Calu3 (cell line): ENCODE measurements at regions of chr20 and their contacts with region 1.

Region 1: GRCh38 chr20:31951530-31952453 is at the start of gene PDRG1:
- DNase-seq: peak; percentile 99
- H3K4me3 Mint-ChIP-seq: peak within 1 kb of the TSS; percentile 82
- H3K27ac Mint-ChIP-seq: peak within 1 kb of the TSS; percentile 91
- H3K4me1 Mint-ChIP-seq: peaks cover 20% of the 10 kb centered on the region
- H3K27me3 Mint-ChIP-seq: peaks cover 43% of the 10 kb centered on the region
- CTCF ChIP-seq: peak; percentile 90
- total RNA-seq, gene PDRG1: 21.4 and 24.5 TPM in 2 replicates

Region 2: GRCh38 chr20:31811796-31812728 is 139.7 kb before region 1 on chr20:
- CTCF ChIA-PET with region 1: no interaction called
- intact Hi-C with region 1: no loop called
- DNase-seq: no peak
- H3K4me3 Mint-ChIP-seq: no peak overlapping the region
- H3K27ac Mint-ChIP-seq: peak overlapping the region; percentile 3
- H3K4me1 Mint-ChIP-seq: no peaks in the 10 kb centered on the region
- H3K27me3 Mint-ChIP-seq: no peaks in the 10 kb centered on the region
- CTCF ChIP-seq: no peak

Region 3: GRCh38 chr20:31835977-31836852 is 115.6 kb before region 1 on chr20:
- CTCF ChIA-PET with region 1: no interaction called
- intact Hi-C with region 1: loop called (anchors 5 kb)
- DNase-seq: peak; percentile 97
- H3K4me3 Mint-ChIP-seq: peak overlapping the region; percentile 6
- H3K27ac Mint-ChIP-seq: no peak overlapping the region
- H3K4me1 Mint-ChIP-seq: peaks cover 17% of the 10 kb centered on the region
- H3K27me3 Mint-ChIP-seq: no peaks in the 10 kb centered on the region
- CTCF ChIP-seq: no peak

Region 4: DNA sequence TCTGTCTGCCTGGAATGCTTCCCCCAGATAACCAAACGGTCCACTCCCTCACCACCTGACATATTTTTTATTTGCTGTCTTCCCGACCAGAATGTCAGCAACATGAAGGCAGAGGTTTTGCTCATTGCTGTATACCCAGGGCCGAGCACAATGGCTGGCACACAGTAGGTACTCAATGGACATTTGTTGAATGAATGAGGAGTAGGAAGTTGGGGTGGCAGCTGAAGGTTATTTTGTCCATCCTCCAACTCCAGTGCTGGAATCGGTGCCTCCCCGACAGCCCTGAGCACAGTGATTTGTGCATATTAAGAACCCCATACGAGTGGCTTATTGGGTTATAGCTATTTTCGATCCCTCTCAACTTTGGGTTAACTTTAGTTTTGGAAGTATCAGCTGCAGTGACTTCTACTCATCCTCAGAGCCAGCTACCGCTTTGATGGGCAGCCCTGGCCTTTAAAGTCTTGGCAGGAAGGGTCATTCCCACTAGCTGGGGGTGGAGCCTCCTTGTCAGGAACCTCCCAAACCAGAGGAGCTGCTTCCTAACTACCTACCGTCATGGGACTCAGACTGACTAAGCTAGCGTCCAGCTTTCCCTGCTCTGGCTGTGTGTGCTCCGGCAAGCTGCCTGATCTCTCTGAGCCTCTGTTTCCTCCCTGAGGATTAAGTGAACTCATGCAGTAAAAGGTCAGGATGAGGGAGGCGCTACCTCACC is 91.6 kb before region 1 on chr20:
- CTCF ChIA-PET with region 1: interaction called, 14 read pairs
- intact Hi-C with region 1: loop called (anchors 2 kb)
- DNase-seq: peak; percentile 58
- H3K4me3 Mint-ChIP-seq: peak overlapping the region; percentile 66
- H3K27ac Mint-ChIP-seq: no peak overlapping the region
- H3K4me1 Mint-ChIP-seq: peaks cover 16% of the 10 kb centered on the region
- H3K27me3 Mint-ChIP-seq: no peaks in the 10 kb centered on the region
- CTCF ChIP-seq: no peak

Region 5: GRCh38 chr20:31984981-31985471 is 33.2 kb after region 1 on chr20:
- CTCF ChIA-PET with region 1: no interaction called
- intact Hi-C with region 1: no loop called
- DNase-seq: no peak
- H3K4me3 Mint-ChIP-seq: no peak overlapping the region
- H3K27ac Mint-ChIP-seq: no peak overlapping the region
- H3K4me1 Mint-ChIP-seq: no peaks in the 10 kb centered on the region
- H3K27me3 Mint-ChIP-seq: no peaks in the 10 kb centered on the region
- CTCF ChIP-seq: no peak

Region 6: DNA sequence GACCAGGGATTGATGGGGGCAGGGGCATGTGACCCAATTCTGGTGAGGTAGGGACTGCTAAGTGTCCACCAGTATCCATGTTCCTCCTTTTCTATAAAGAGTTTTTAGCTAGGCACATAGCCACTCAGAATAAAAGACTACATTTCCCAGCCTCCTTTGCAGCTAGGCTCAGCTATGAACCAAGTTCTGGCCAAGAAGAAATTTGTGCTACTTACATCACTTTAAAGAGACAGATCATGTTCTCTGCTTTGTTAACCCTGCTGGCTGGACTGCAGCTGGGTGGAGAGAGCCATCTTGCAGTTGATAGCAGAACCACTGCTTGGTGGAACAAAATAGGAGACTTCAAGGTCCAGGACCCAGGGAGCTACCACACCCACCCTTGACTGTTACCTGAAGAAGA is 53.2 kb after region 1 on chr20:
- CTCF ChIA-PET with region 1: no interaction called
- intact Hi-C with region 1: no loop called
- DNase-seq: no peak
- H3K4me3 Mint-ChIP-seq: no peak overlapping the region
- H3K27ac Mint-ChIP-seq: no peak overlapping the region
- H3K4me1 Mint-ChIP-seq: peaks cover 8% of the 10 kb centered on the region
- H3K27me3 Mint-ChIP-seq: peaks cover 98% of the 10 kb centered on the region
- CTCF ChIP-seq: no peak

Region 7: DNA sequence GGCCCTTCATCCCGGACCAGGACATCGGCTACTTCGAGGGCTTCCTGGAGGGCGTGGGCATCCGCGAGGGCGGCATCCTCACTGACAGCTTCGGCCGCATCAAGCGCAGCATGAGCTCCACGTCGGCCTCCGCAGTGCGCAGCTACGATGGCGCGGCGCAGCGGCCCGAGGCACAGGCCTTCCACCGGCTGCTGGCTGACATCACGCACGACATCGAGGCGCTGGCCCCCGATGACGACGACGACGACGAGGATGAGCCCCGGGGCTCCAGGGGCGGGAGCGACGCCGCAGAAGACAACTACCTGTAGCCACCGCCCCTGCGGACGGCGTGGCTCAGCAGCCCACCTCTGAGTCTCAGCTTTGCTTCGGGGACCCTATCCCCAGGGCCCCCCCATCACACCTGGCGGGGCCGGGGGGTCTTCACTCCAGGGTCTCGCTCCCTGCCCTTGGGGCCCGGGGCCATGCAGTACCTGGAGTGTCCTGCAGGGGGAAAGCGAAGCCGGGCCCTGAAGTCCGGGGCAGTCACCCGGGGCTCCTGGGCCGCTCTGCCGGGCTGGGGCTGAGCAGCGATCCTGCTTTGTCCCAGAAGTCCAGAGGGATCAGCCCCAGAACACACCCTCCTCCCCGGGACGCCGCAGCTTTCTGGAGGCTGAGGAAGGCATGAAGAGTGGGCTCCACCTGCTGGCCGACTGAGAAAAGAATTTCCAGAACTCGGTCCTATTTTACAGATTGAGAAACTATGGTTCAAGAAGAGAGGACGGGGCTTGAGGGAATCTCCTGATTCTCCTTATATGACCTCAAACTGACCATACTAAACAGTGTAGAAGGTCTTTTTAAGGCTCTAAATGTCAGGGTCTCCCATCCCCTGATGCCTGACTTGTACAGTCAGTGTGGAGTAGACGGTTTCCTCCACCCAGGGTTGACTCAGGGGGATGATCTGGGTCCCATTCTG is 79.5 kb after region 1 on chr20:
- CTCF ChIA-PET with region 1: interaction called, 11 read pairs
- intact Hi-C with region 1: no loop called
- DNase-seq: peak; percentile 90
- H3K4me3 Mint-ChIP-seq: no peak overlapping the region
- H3K27ac Mint-ChIP-seq: no peak overlapping the region
- H3K4me1 Mint-ChIP-seq: peaks cover 13% of the 10 kb centered on the region
- H3K27me3 Mint-ChIP-seq: peaks cover 79% of the 10 kb centered on the region
- CTCF ChIP-seq: peak; percentile 100